ENCODE measurements at regions of chr5 and their contacts with region 1.

Region 1: DNA sequence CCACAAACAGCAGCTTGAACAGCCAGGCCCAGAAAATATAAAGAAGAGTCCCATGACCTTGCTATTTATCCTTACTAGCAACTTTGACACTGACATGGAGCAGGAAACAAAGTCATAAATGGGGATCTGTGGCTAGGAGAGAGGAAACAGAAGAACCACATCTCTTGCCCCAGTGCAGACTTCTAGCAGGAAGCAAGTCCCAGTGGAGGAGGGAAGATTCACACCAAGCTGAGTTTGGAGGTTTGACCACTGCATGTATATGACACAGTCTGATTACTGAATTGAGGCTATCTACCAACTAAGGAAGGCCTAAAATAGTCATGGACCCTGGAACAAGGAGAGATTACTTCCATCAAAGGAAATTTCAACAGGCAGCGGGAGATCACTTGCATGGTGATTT is 51.4 kb downstream of the CDH6 start:
- DNase-seq: no peak
- H3K4me3 ChIP-seq: no peak overlapping the region
- H3K27me3 ChIP-seq: no peaks in the 10 kb centered on the region
- CTCF ChIP-seq: no peak

Region 2: DNA sequence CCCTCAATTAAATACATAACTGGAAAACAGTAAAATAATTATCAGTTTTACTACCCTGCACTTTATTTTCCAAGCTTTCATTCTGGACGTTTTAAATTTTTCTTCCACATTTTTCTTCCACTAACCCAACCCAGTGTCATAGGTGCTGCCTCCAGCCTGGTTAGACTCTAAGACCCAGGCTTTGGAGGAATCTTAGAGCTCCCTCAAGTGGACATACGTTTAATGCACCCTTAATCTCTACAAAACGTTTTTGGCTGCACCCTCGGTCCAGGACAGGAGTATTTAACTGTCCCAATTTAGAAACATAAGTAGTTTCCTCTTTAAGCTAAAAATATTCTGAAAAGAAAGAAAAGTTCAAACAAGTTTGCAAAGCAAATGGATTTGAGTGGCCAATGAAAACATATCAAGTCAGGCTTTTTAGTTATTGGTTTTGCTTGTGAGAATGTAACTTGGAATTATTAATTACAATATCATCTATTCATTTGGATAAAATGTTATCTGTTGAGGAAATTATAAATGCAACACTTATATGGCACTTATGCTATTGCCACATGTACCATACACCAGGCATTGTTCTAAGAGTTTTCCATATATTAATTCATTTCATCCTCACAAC is 12.5 kb before region 1 on chr5:
- CTCF ChIA-PET with region 1: interaction called, 23 read pairs
- POLR2A ChIA-PET with region 1: no interaction called
- DNase-seq: no peak
- H3K4me3 ChIP-seq: no peak overlapping the region
- H3K27me3 ChIP-seq: no peaks in the 10 kb centered on the region
- CTCF ChIP-seq: peak; percentile 83

Region 3: GRCh38 chr5:31854181-31855133 is 609.5 kb after region 1 on chr5:
- CTCF ChIA-PET with region 1: no interaction called
- POLR2A ChIA-PET with region 1: no interaction called
- DNase-seq: no peak
- H3K4me3 ChIP-seq: peak overlapping the region; percentile 33
- H3K27me3 ChIP-seq: peaks cover 17% of the 10 kb centered on the region
- CTCF ChIP-seq: no peak